ENCODE measurements at regions of chr3 and their contacts with region 1.

Region 1: DNA sequence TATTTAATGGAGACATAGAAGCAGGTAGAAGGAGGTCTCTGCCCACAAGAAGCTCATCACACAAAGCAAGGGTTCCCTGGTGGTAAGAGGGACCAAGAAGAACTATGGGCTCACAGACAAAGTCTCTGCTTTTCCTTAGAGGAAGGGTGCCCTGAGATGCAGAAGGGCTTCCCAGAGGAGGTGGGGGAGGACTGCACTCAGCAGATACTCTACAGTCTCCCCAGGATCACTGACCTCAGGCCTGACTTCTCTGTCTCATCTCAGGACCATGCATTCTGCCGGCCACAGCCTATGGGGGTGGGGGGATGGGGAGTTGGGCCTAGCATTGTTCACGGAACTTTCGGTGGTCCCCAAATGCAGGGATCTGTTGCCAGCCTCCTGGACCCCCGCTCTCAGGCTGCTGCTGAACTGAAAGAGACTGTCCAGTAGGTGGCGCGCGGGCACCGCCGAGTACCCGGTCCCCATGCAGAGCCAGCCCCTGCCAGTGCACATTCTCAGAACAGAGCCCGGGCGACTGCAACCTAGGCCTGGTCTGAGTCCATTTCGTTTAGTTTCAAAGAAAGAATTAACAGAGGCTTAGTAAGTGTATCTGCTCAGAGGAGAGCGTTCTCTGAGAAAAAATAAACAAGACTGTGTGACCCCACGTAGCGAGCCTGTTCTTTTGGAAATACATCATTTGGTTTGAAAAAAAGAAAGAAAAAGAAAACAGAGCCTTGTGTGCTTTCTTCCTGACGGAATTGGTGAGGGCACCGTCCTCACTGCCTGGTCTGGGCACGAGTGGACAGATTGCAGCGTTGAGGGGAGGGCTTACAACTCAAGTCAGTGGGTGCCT is 74.1 kb downstream of the LRTM1 start:
- DNase-seq: no peak
- H3K4me3 ChIP-seq: no peak overlapping the region
- H3K27ac ChIP-seq: no peak overlapping the region
- H3K4me1 ChIP-seq: peaks cover 15% of the 10 kb centered on the region
- H3K27me3 ChIP-seq: peaks cover 5% of the 10 kb centered on the region
- CTCF ChIP-seq: peak; percentile 77 to 82

Region 2: DNA sequence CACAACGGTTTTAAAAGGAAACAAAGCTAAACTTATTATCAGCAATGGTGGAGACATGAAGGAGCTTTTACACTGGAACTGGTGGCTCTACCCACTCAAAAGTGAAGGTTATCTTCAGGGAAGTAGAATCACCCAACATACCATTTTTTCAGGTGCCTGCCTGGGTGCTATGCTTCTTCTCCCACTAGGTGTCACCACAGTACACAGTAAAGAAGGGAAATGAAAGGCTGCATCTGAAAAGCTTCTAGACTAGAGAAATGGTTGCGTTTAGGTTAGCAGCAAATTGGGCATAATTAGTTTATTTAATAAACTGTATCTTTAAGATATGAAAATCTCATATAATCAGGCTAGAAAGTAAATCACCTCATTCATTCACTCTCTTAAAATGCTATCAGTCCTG is 915.1 kb before region 1 on chr3:
- CTCF ChIA-PET with region 1: no interaction called
- dilution Hi-C with region 1: no loop called
- in situ Hi-C with region 1: no loop called
- intact Hi-C with region 1: loop called (anchors 2 kb)
- DNase-seq: peak; percentile 35
- H3K4me3 ChIP-seq: no peak overlapping the region
- H3K27ac ChIP-seq: no peak overlapping the region
- H3K4me1 ChIP-seq: peaks cover 10% of the 10 kb centered on the region
- H3K27me3 ChIP-seq: no peaks in the 10 kb centered on the region
- CTCF ChIP-seq: peak; percentile 80 to 82

Region 3: GRCh38 chr3:55013145-55013925 is 159.5 kb after region 1 on chr3:
- CTCF ChIA-PET with region 1: no interaction called
- dilution Hi-C with region 1: no loop called
- in situ Hi-C with region 1: no loop called
- intact Hi-C with region 1: loop called (anchors 1 kb)
- DNase-seq: peak; percentile 3
- H3K4me3 ChIP-seq: no peak overlapping the region
- H3K27ac ChIP-seq: no peak overlapping the region
- H3K4me1 ChIP-seq: no peaks in the 10 kb centered on the region
- H3K27me3 ChIP-seq: no peaks in the 10 kb centered on the region
- CTCF ChIP-seq: no peak

Region 4: DNA sequence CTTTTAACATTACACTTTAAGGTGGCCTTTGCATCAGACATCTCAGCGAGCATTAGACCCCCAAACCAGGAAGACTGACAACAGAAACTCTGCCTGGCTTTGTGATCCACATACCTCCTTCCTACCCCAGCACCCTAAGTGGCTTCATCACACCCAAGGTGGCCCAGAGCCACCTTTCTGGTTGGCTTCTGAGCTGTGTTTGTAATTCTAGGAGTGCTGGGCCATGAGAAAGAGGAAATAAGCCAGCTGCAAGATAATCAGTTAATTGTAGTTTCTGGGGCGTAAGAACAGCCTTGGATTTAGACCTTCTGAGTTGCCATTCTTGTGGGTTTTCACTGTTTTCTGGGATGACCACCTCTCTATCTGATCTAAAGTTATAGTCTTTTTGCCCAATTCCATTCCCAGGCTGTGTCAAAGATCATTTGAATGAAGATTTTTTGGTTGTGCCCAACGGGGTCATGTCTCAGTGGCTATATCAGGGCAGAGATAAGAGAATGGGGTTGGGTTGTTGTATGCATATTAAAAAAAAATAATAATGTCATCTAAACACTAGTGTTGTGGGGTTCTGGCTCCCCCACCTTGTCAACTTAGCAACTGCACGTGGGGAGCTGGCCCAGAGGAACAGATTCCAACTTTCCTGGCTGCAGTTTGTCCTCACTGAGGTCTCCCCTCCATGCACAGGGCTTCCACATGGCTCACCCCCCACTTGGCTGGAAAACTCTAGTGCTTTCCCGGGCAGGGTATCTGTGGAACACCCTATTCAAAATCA is 868.1 kb after region 1 on chr3:
- CTCF ChIA-PET with region 1: no interaction called
- dilution Hi-C with region 1: no loop called
- in situ Hi-C with region 1: loop called in 1 of 2 experiments (anchors 25 kb)
- intact Hi-C with region 1: loop called (anchors 1 kb)
- DNase-seq: peak; percentile 27
- H3K4me3 ChIP-seq: no peak overlapping the region
- H3K27ac ChIP-seq: no peak overlapping the region
- H3K4me1 ChIP-seq: no peaks in the 10 kb centered on the region
- H3K27me3 ChIP-seq: peaks cover 4% of the 10 kb centered on the region
- CTCF ChIP-seq: peak; percentile 73 to 76

Region 5: DNA sequence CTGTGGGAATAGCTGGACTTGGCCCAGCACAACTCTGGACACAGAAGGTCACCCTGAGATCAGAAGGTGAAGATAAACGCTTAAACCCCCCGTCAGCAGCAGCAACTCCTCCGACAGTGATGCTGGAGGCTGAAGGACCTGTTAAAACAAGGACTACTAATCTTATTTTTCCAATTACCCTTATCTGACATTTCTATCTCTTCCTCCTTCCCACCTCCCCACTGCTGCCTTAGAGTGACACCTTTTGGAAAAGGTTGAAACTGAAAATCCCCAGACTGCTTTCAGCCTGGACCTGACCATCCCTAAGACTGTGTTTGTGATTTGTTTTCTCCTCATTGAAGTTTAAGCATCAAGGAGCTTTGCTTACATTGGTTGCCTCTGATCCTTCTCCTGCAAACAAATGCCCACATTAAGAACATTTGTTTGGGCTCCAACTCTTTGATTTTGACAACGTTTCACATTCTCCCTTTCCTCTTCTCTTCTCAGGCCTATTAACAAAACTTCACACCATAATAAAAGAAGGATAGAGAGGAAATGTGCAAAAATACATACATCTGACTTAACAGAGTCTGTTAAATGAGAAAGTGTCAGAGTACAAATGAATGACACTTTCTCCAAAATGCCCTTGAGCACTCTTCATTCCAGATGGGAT is 1043.9 kb after region 1 on chr3:
- CTCF ChIA-PET with region 1: no interaction called
- dilution Hi-C with region 1: no loop called
- in situ Hi-C with region 1: no loop called
- intact Hi-C with region 1: loop called (anchors 1 kb)
- DNase-seq: peak; percentile 45
- H3K4me3 ChIP-seq: no peak overlapping the region
- H3K27ac ChIP-seq: no peak overlapping the region
- H3K4me1 ChIP-seq: no peaks in the 10 kb centered on the region
- H3K27me3 ChIP-seq: no peaks in the 10 kb centered on the region
- CTCF ChIP-seq: peak; percentile 48 to 84

Measured in mammary epithelial cell (primary cell).